A673 (cell line): ENCODE measurements at regions of chr6 and their contacts with region 1.

Region 1: DNA sequence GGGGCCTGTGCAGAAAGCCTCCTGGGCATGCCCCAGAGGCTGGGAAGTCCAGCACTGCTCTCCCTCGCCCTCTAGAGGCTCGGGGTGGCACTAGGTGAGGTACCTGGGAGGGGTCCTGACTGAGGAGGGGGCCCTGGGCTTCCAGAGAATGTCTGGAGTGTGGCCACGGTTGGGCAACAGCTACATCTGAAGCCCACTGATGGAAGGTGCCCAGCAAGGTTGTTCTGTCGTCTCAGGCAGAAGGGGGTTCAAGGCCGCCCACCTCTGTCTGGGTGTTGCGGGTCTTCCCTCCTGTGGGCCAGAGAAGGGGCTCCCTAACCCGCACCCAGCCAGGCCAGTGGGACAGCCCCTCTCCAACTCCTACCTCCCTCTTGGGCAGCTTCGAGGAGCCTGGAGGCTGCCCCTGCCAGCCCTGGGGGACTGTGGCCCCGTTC is 11.4 kb upstream of the VEGFA start:
- DNase-seq: peak; percentile 35
- H3K4me3 ChIP-seq: no peak overlapping the region
- H3K27ac ChIP-seq: no peak overlapping the region
- H3K4me1 ChIP-seq: peaks cover 4% of the 10 kb centered on the region
- H3K27me3 ChIP-seq: no peaks in the 10 kb centered on the region
- CTCF ChIP-seq: peak; percentile 86

Region 2: GRCh38 chr6:43516697-43517504 is 241.7 kb before region 1 on chr6 and contains the starts of genes POLR1C and YIPF3:
- CTCF ChIA-PET with region 1: no interaction called
- POLR2A ChIA-PET with region 1: no interaction called
- intact Hi-C with region 1: no loop called
- DNase-seq: peak; percentile 99
- H3K4me3 ChIP-seq: peak within 1 kb of the TSS; percentile 89
- H3K27ac ChIP-seq: peak within 1 kb of the TSS; percentile 88
- H3K4me1 ChIP-seq: peaks cover 12% of the 10 kb centered on the region
- H3K27me3 ChIP-seq: no peaks in the 10 kb centered on the region
- CTCF ChIP-seq: no peak
- total RNA-seq, gene POLR1C: 64.1 and 75.4 TPM in 2 replicates
- total RNA-seq, gene YIPF3: 75.1 and 84.2 TPM in 2 replicates

Region 3: DNA sequence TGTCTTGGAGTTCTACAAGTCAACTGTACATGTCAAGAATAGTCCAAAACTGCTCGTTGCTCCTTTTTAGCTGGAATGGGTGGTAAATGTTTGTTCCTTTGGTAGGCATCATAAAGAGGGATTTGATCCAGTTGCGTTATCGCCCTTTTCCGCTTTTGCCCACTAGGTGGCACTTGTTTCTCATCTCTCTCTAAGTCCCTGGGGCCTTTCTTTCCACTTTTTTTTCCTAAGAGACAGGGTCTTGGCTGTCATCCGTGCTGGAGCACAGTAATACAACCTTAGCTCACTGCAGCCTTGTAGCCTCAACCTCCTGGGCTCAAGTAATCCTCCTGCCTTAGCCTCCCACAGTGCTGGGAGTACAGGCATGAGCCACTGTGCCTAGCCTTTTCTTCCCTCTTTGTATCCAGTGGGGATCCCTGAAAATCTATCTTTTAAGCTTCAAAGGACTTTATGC is 150.3 kb before region 1 on chr6:
- CTCF ChIA-PET with region 1: no interaction called
- POLR2A ChIA-PET with region 1: no interaction called
- intact Hi-C with region 1: loop called (anchors 5 kb)
- DNase-seq: peak; percentile 88
- H3K4me3 ChIP-seq: no peak overlapping the region
- H3K27ac ChIP-seq: no peak overlapping the region
- H3K4me1 ChIP-seq: peaks cover 4% of the 10 kb centered on the region
- H3K27me3 ChIP-seq: no peaks in the 10 kb centered on the region
- CTCF ChIP-seq: peak; percentile 90

Region 4: DNA sequence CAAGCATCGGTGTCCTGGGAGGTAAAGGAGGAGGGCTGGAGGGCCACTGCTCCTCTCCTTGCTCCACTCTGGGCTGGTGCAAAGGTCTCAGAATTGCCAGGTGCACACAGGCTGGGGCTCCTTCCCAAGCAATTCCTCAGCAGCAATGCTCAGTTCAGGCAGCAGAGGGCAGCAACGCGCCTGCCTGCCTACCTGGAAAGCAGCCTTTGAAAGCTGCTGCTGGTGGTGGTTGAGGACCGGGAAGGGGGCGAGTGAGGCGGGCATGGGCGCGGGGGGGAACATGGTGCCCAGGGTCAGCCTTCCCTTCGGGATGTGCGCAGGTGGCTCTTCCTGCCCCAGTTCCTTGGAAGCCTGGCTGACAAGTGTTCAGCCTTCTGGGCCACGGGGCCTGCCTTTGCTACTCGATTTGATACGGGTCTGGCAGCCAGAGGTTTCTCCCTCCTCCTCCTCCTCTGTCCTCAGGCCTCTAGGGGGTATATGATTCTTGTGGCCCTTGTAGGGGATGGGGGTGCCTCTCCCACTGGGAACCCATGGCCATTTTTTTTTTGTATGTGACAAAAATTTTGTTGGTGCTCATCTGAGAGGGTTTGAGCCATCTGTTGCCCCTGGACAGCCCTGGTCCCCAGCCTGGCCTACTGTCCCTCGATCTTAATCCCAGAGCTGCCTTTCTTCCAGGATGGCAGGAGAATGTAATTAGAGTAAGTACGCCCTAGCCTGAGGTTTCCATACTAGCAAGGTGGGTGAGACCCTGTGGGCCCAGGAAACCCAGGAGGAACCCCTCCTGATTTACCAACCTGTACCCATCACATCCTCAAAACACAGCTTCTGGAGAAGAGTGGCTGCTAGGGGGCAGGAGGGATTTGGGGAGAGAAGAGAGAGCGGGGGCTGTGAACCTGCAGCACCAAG is 91.1 kb before region 1 on chr6:
- CTCF ChIA-PET with region 1: no interaction called
- POLR2A ChIA-PET with region 1: no interaction called
- intact Hi-C with region 1: loop called (anchors 5 kb)
- DNase-seq: peak; percentile 81
- H3K4me3 ChIP-seq: peak overlapping the region; percentile 21
- H3K27ac ChIP-seq: no peak overlapping the region
- H3K4me1 ChIP-seq: peaks cover 14% of the 10 kb centered on the region
- H3K27me3 ChIP-seq: no peaks in the 10 kb centered on the region
- CTCF ChIP-seq: peak; percentile 96

Region 5: DNA sequence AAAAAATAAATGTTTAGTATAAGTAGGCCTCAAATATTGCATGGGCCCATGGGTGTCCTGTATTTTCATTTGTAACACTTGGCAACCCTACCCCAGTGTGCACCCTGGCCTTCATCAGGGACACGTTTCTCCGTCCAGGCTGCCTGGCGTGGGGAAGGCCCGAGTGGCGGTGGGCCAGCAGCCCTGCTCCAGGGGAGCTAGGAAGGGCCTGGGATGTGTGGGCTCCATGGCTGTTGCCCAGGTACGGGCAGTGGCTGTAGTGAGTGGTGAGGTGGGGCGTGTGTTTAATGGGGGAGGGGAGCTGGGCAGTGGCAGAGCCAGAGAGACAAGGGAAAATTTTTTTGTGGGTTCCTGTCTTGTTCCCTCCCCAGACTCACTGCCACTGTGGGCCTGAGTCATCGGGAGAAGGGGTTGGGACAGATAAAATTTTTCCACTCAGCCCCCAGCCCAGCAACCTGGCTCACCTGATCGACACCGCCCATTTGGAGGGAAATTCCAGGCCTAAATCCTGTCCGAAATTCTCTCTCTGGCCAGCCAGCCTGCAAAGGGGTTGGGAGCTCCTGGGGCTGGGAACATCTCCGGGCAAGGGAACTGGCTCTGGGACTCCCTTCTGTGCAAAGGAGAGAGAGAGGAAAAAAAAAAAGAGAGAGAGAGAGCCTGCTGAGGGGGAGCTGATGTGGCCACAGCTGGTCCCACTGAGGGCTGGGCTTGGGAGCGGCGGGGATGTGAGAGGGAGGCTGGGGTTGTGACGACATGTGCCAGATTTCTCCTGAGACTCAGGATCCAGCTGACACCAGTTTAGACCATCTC is 21.2 kb before region 1 on chr6:
- CTCF ChIA-PET with region 1: no interaction called
- POLR2A ChIA-PET with region 1: no interaction called
- intact Hi-C with region 1: no loop called
- DNase-seq: peak; percentile 28
- H3K4me3 ChIP-seq: no peak overlapping the region
- H3K27ac ChIP-seq: no peak overlapping the region
- H3K4me1 ChIP-seq: no peaks in the 10 kb centered on the region
- H3K27me3 ChIP-seq: no peaks in the 10 kb centered on the region
- CTCF ChIP-seq: no peak

Region 6: DNA sequence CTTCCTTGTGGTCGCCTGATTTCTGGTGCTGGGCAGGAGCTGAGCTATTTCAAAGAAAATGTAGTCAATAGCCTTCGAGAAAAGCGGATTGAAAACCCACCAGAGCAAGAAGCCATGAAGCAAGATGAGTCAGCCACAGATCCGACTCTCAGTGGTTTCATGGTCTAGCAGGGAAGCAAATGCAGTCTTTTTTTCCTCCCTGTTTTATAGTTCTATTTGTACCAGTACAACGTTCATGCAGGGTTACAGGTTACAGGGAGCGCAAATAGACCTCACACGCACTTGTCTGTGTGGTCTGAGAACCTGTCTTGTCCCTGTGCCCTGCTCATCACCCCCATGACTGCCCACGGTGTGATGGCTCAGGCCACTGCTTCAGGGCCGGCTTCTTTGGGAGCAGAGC is 1928.9 kb after region 1 on chr6:
- CTCF ChIA-PET with region 1: no interaction called
- POLR2A ChIA-PET with region 1: no interaction called
- intact Hi-C with region 1: no loop called
- DNase-seq: no peak
- H3K4me3 ChIP-seq: no peak overlapping the region
- H3K27ac ChIP-seq: no peak overlapping the region
- H3K4me1 ChIP-seq: no peaks in the 10 kb centered on the region
- H3K27me3 ChIP-seq: no peaks in the 10 kb centered on the region
- CTCF ChIP-seq: no peak